ENCODE measurements at regions of chr2 and their contacts with region 1.

Region 1: GRCh38 chr2:71716781-71717624 is 263.6 kb downstream of the DYSF start:
- DNase-seq: peak; percentile 91 to 98
- H3K4me3 ChIP-seq: peak overlapping the region in 1 of 2 donors; percentile 1
- H3K27ac ChIP-seq: peak overlapping the region; percentile 91
- H3K4me1 ChIP-seq: peaks cover 41 to 77% of the 10 kb centered on the region in 2 donors
- H3K27me3 ChIP-seq: no peaks in the 10 kb centered on the region
- CTCF ChIP-seq: no peak

Region 2: GRCh38 chr2:71614976-71615766 is 101.8 kb before region 1 on chr2:
- intact Hi-C with region 1: loop called (anchors 5 kb)
- DNase-seq: peak; percentile 46 to 89
- H3K4me3 ChIP-seq: no peak overlapping the region
- H3K27ac ChIP-seq: peak overlapping the region; percentile 84 to 87
- H3K4me1 ChIP-seq: peaks cover 0 to 27% of the 10 kb centered on the region in 2 donors
- H3K27me3 ChIP-seq: no peaks in the 10 kb centered on the region
- CTCF ChIP-seq: no peak

Region 3: GRCh38 chr2:71646028-71646427 is 71.0 kb before region 1 on chr2:
- intact Hi-C with region 1: loop called (anchors 5 kb)
- DNase-seq: peak in 1 of 2 donors; percentile 88
- H3K4me3 ChIP-seq: no peak overlapping the region
- H3K27ac ChIP-seq: peak overlapping the region; percentile 41 to 81
- H3K4me1 ChIP-seq: peaks cover 4 to 12% of the 10 kb centered on the region in 2 donors
- H3K27me3 ChIP-seq: no peaks in the 10 kb centered on the region
- CTCF ChIP-seq: no peak

Region 4: DNA sequence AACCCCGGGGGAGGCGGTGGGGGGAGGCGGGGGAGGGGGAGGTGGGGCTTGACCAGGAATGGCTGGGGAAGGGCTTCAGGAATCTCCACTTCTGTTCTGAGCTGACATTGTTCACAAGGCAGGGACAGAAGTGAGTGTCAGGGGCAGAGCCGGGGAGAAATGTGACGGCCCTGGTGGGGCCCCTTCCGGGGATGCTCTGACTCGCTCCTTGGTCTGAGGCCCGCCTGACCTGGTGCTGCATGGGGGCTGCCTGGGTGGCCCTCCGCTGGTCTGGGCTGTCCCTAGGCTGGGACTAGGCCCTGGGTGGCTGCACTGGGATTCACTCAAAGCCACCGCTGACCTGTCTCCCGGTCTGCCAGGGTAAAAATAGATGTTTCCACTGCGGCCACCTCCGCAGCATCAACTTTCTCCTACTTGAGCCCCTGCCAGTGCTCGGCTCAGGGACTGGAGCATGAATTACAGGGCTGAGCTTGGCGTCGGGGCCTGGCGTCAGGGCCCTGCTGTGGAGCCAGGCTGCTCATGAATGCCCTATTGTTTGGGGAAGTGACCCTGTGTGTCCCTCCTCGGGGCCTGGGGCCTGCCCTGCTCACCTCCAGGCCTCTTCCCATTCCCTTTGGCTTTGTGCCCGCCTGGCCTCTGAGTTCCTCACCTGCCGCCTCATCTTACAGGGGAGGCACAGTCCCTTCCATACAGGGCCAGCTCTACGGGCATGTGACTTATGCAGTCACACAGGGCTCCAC is 16.2 kb before region 1 on chr2:
- intact Hi-C with region 1: loop called (anchors 2 kb)
- DNase-seq: peak; percentile 56 to 94
- H3K4me3 ChIP-seq: no peak overlapping the region
- H3K27ac ChIP-seq: peak overlapping the region; percentile 71 to 80
- H3K4me1 ChIP-seq: peaks cover 7 to 71% of the 10 kb centered on the region in 2 donors
- H3K27me3 ChIP-seq: no peaks in the 10 kb centered on the region
- CTCF ChIP-seq: no peak

Region 5: DNA sequence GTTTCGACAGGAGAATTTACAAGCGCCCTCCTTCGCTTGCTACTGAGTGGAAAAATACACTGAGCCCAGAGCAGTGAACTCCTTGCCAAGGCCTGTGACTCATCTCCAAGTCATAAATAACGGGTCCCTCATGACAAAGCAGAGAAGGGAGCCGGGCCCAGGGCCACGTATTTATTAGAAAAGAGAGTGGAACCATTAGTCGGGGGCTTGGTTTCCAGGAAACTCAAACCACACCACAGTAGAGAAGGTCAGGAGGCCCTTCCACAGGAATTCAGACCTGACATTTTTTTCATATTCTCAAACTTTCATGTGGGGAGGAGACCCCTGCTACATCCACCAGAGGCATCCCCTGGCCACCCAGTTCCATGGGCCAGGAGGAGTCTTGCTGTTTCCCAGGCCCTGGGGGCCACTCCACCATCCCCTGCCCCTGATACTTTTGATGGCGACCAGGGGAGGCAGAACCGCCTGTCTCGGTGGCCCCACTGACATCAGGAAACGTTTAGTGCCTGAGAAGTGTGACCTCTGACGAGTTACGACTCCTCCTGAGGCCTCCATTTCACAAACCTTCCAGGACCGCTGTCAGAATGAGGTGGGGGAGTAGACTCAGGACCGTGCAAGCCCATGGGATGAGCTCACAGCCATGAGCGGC is 26.1 kb after region 1 on chr2:
- intact Hi-C with region 1: loop called (anchors 1 kb)
- DNase-seq: peak; percentile 54 to 93
- H3K4me3 ChIP-seq: no peak overlapping the region
- H3K27ac ChIP-seq: peak overlapping the region; percentile 53 to 62
- H3K4me1 ChIP-seq: peaks cover 23% of the 10 kb centered on the region in 2 donors
- H3K27me3 ChIP-seq: no peaks in the 10 kb centered on the region
- CTCF ChIP-seq: no peak

Region 6: GRCh38 chr2:71843391-71843850 is 126.4 kb after region 1 on chr2:
- intact Hi-C with region 1: loop called (anchors 5 kb)
- DNase-seq: no peak
- H3K4me3 ChIP-seq: no peak overlapping the region
- H3K27ac ChIP-seq: peak overlapping the region; percentile 25 to 42
- H3K4me1 ChIP-seq: peaks cover 0 to 12% of the 10 kb centered on the region in 2 donors
- H3K27me3 ChIP-seq: no peaks in the 10 kb centered on the region
- CTCF ChIP-seq: no peak

Region 7: DNA sequence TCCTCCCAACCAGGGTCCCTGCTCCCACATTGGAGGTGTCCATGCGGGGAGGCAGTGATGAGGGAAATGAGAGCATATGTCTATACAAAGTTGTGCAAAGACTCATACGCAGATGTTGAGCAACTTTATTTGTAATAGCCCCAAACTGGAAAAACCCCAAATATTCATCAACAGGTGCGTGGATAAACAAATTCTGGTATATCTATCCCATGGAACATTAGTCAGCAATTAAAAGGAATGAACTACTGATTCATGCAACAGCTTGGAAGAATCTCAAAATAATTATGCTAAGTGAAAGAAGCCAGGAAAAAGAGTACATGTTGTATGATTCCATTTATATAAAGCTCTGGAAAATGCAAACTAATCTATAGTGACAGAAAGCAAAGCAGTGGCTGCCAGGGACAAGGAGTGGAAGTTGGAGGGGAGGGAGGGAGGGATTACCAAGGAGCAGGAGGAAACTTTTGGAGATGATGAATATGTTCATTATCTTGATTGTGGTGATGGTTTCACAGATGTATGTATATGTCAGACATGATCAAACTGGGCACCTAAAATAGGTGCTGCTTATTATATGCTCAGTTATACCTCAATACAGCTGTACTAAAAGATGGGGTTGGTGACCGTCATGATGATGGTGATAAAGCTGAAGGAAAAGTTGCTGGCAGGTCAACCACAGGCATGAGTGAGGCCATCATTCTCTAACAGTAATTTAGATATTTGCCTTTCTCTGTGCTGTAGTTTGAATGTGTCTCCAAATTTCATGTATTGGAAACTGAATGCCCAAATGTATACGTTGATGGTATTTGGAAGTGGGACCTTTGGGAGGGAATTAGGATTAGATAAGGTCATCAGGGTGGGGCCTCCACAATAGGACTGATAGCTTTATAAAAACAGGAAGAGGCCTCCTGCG is 159.8 kb after region 1 on chr2:
- intact Hi-C with region 1: no loop called
- DNase-seq: no peak
- H3K4me3 ChIP-seq: no peak overlapping the region
- H3K27ac ChIP-seq: no peak overlapping the region
- H3K4me1 ChIP-seq: peaks cover 8 to 25% of the 10 kb centered on the region in 2 donors
- H3K27me3 ChIP-seq: no peaks in the 10 kb centered on the region
- CTCF ChIP-seq: no peak

Region 8: GRCh38 chr2:72367530-72368225 is 650.7 kb after region 1 on chr2:
- intact Hi-C with region 1: loop called (anchors 5 kb)
- DNase-seq: peak; percentile 35 to 85
- H3K4me3 ChIP-seq: no peak overlapping the region
- H3K27ac ChIP-seq: no peak overlapping the region
- H3K4me1 ChIP-seq: no peaks in the 10 kb centered on the region
- H3K27me3 ChIP-seq: no peaks in the 10 kb centered on the region
- CTCF ChIP-seq: peak; percentile 18 to 51 (median 18)

Measured in ascending aorta (tissue), 2 donors.